ENCODE measurements at regions of chr4 and their contacts with region 1.

Region 1: GRCh38 chr4:163554870-163555465 is 60.5 kb downstream of the TMA16 start:
- DNase-seq: peak in 5 of 9 donors; percentile 21 to 43 (median 32)
- ATAC-seq: no peak
- H3K4me3 ChIP-seq: no peak overlapping the region
- H3K4me3 Mint-ChIP-seq: no peak overlapping the region
- H3K27ac ChIP-seq: no peak overlapping the region
- H3K27ac Mint-ChIP-seq: no peak overlapping the region
- H3K4me1 ChIP-seq: peaks cover 18 to 20% of the 10 kb centered on the region in 2 donors
- H3K4me1 Mint-ChIP-seq: peaks cover 18 to 52% (median 32%) of the 10 kb centered on the region in 7 donors
- H3K27me3 ChIP-seq: no peaks in the 10 kb centered on the region
- H3K27me3 Mint-ChIP-seq: peaks cover 0 to 5% (median 0%) of the 10 kb centered on the region in 5 donors

Region 2: GRCh38 chr4:163166041-163166579 is 388.9 kb before region 1 on chr4:
- CTCF ChIA-PET with region 1: no interaction called
- POLR2A ChIA-PET with region 1: no interaction called
- intact Hi-C with region 1: loop called in 1 of 2 experiments (anchors 2 kb)
- DNase-seq: peak; percentile 42 to 70 (median 63)
- ATAC-seq: peak; percentile 60
- H3K4me3 ChIP-seq: peak overlapping the region; percentile 69
- H3K4me3 Mint-ChIP-seq: peak overlapping the region; percentile 88 to 98 (median 92)
- H3K27ac ChIP-seq: peak overlapping the region; percentile 98
- H3K27ac Mint-ChIP-seq: peak overlapping the region; percentile 97 to 100 (median 99)
- H3K4me1 ChIP-seq: peaks cover 5 to 19% of the 10 kb centered on the region in 2 donors
- H3K4me1 Mint-ChIP-seq: peaks cover 28 to 67% (median 54%) of the 10 kb centered on the region in 7 donors
- H3K27me3 ChIP-seq: no peaks in the 10 kb centered on the region
- H3K27me3 Mint-ChIP-seq: no peaks in the 10 kb centered on the region

Region 3: GRCh38 chr4:163544407-163545038 is 10.4 kb before region 1 on chr4:
- CTCF ChIA-PET with region 1: interaction called, 13 read pairs
- POLR2A ChIA-PET with region 1: no interaction called
- intact Hi-C with region 1: no loop called
- DNase-seq: peak in 7 of 9 donors; percentile 21 to 58 (median 43)
- ATAC-seq: peak; percentile 95
- H3K4me3 ChIP-seq: peak overlapping the region; percentile 46
- H3K4me3 Mint-ChIP-seq: no peak overlapping the region
- H3K27ac ChIP-seq: no peak overlapping the region
- H3K27ac Mint-ChIP-seq: no peak overlapping the region
- H3K4me1 ChIP-seq: peaks cover 0 to 2% of the 10 kb centered on the region in 2 donors
- H3K4me1 Mint-ChIP-seq: peaks cover 0 to 11% (median 9%) of the 10 kb centered on the region in 7 donors
- H3K27me3 ChIP-seq: no peaks in the 10 kb centered on the region
- H3K27me3 Mint-ChIP-seq: no peaks in the 10 kb centered on the region

Region 4: GRCh38 chr4:163673848-163674697 is 119.1 kb after region 1 on chr4:
- CTCF ChIA-PET with region 1: interaction called, 31 read pairs
- POLR2A ChIA-PET with region 1: no interaction called
- intact Hi-C with region 1: no loop called
- DNase-seq: no peak
- ATAC-seq: no peak
- H3K4me3 ChIP-seq: no peak overlapping the region
- H3K4me3 Mint-ChIP-seq: no peak overlapping the region
- H3K27ac ChIP-seq: no peak overlapping the region
- H3K27ac Mint-ChIP-seq: no peak overlapping the region
- H3K4me1 ChIP-seq: no peaks in the 10 kb centered on the region
- H3K4me1 Mint-ChIP-seq: peaks cover 0 to 52% (median 28%) of the 10 kb centered on the region in 7 donors
- H3K27me3 ChIP-seq: no peaks in the 10 kb centered on the region
- H3K27me3 Mint-ChIP-seq: no peaks in the 10 kb centered on the region

Region 5: GRCh38 chr4:163755013-163755412 is 200.0 kb after region 1 on chr4:
- CTCF ChIA-PET with region 1: interaction called, 35 read pairs
- POLR2A ChIA-PET with region 1: no interaction called
- intact Hi-C with region 1: loop called (anchors 1 to 2 kb)
- DNase-seq: peak in 5 of 9 donors; percentile 24 to 50 (median 40)
- ATAC-seq: peak; percentile 54
- H3K4me3 ChIP-seq: no peak overlapping the region
- H3K4me3 Mint-ChIP-seq: peak overlapping the region in 7 of 10 donors; percentile 6 to 67 (median 38)
- H3K27ac ChIP-seq: no peak overlapping the region
- H3K27ac Mint-ChIP-seq: no peak overlapping the region
- H3K4me1 ChIP-seq: no peaks in the 10 kb centered on the region
- H3K4me1 Mint-ChIP-seq: peaks cover 0 to 9% (median 8%) of the 10 kb centered on the region in 7 donors
- H3K27me3 ChIP-seq: no peaks in the 10 kb centered on the region
- H3K27me3 Mint-ChIP-seq: peaks cover 0 to 4% (median 0%) of the 10 kb centered on the region in 5 donors

Region 6: GRCh38 chr4:164731827-164732474 is 1177.0 kb after region 1 on chr4:
- CTCF ChIA-PET with region 1: interaction called, 66 read pairs
- POLR2A ChIA-PET with region 1: no interaction called
- intact Hi-C with region 1: loop called (anchors 1 kb)
- DNase-seq: peak; percentile 10 to 46 (median 39)
- ATAC-seq: peak; percentile 58
- H3K4me3 ChIP-seq: no peak overlapping the region
- H3K4me3 Mint-ChIP-seq: no peak overlapping the region
- H3K27ac ChIP-seq: no peak overlapping the region
- H3K27ac Mint-ChIP-seq: no peak overlapping the region
- H3K4me1 ChIP-seq: no peaks in the 10 kb centered on the region
- H3K4me1 Mint-ChIP-seq: peaks cover 0 to 4% (median 0%) of the 10 kb centered on the region in 7 donors
- H3K27me3 ChIP-seq: no peaks in the 10 kb centered on the region
- H3K27me3 Mint-ChIP-seq: peaks cover 10 to 16% (median 15%) of the 10 kb centered on the region in 5 donors

Region 7: GRCh38 chr4:164956766-164957643 is 1402.0 kb after region 1 on chr4:
- CTCF ChIA-PET with region 1: no interaction called
- POLR2A ChIA-PET with region 1: no interaction called
- intact Hi-C with region 1: loop called in 1 of 2 experiments (anchors 2 kb)
- DNase-seq: peak; percentile 41 to 78 (median 59)
- ATAC-seq: peak; percentile 96
- H3K4me3 ChIP-seq: peak overlapping the region; percentile 69
- H3K4me3 Mint-ChIP-seq: peak overlapping the region; percentile 79 to 94 (median 91)
- H3K27ac ChIP-seq: no peak overlapping the region
- H3K27ac Mint-ChIP-seq: peak overlapping the region; percentile 70 to 88 (median 81)
- H3K4me1 ChIP-seq: no peaks in the 10 kb centered on the region
- H3K4me1 Mint-ChIP-seq: peaks cover 11 to 28% (median 21%) of the 10 kb centered on the region in 7 donors
- H3K27me3 ChIP-seq: no peaks in the 10 kb centered on the region
- H3K27me3 Mint-ChIP-seq: peaks cover 7 to 21% (median 12%) of the 10 kb centered on the region in 5 donors

Measured in naive thymus-derived CD4-positive, alpha-beta T cell (primary cell).